Activated T-helper 1 cell treated with anti-CD3 and anti-CD28 coated beads, Interleukin-12 subunit alpha, Interleukin-12 subunit beta, Interleukin-2, Interleukin-4 antibody, amounts not matched to agents 30 ng/mL and 10 ng/mL and 1 ng/mL, durations not matched to agents 14 hours and 24 hours and 36 hours (primary cell): ENCODE measurements at regions of chr6 and their contacts with region 1.

Region 1: DNA sequence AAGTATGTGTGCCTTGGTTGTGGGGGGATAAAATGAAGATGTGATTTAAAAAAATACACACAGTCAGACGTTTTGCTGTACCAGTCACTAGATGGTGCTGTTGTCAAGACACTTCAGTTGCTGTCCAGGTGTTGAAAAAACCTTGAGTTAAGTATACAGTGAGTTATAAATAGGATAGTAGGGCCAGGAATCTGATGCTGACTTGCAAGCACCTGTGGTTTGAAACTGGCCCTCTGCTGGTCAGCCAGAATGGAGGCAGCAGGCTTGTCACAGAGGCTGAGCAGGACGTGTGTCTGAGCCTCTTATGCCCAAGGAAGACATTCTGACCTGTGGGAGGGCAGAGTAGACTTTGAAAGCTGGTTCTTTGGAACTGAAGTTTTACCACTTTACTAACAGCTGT is 27.8 kb downstream of the RNF8 start:
- DNase-seq: peak; percentile 2
- H3K4me3 Mint-ChIP-seq: no peak overlapping the region
- H3K27ac Mint-ChIP-seq: no peak overlapping the region
- H3K4me1 Mint-ChIP-seq: no peaks in the 10 kb centered on the region
- H3K27me3 Mint-ChIP-seq: no peaks in the 10 kb centered on the region

Region 2: GRCh38 chr6:37653933-37654565 is 272.5 kb after region 1 on chr6:
- intact Hi-C with region 1: loop called (anchors 1 kb)
- DNase-seq: peak; percentile 34
- H3K4me3 Mint-ChIP-seq: no peak overlapping the region
- H3K27ac Mint-ChIP-seq: no peak overlapping the region
- H3K4me1 Mint-ChIP-seq: peaks cover 11% of the 10 kb centered on the region
- H3K27me3 Mint-ChIP-seq: peaks cover 11% of the 10 kb centered on the region

Region 3: GRCh38 chr6:37691904-37692806 is 310.6 kb after region 1 on chr6:
- intact Hi-C with region 1: loop called (anchors 1 kb)
- DNase-seq: peak; percentile 65
- H3K4me3 Mint-ChIP-seq: no peak overlapping the region
- H3K27ac Mint-ChIP-seq: no peak overlapping the region
- H3K4me1 Mint-ChIP-seq: peaks cover 18% of the 10 kb centered on the region
- H3K27me3 Mint-ChIP-seq: peaks cover 28% of the 10 kb centered on the region